ENCODE measurements at regions of chr10 and their contacts with region 1.

Region 1: GRCh38 chr10:91163269-91163868 is 57.1 kb upstream of the PCGF5 start:
- DNase-seq: peak; percentile 59 to 79
- ATAC-seq: peak; percentile 53 to 62 (median 58)
- H3K4me3 ChIP-seq: peak overlapping the region; percentile 98
- H3K27ac ChIP-seq: peak overlapping the region; percentile 99
- H3K4me1 ChIP-seq: peaks cover 31% of the 10 kb centered on the region
- H3K27me3 ChIP-seq: no peaks in the 10 kb centered on the region
- CTCF ChIP-seq: no peak

Region 2: DNA sequence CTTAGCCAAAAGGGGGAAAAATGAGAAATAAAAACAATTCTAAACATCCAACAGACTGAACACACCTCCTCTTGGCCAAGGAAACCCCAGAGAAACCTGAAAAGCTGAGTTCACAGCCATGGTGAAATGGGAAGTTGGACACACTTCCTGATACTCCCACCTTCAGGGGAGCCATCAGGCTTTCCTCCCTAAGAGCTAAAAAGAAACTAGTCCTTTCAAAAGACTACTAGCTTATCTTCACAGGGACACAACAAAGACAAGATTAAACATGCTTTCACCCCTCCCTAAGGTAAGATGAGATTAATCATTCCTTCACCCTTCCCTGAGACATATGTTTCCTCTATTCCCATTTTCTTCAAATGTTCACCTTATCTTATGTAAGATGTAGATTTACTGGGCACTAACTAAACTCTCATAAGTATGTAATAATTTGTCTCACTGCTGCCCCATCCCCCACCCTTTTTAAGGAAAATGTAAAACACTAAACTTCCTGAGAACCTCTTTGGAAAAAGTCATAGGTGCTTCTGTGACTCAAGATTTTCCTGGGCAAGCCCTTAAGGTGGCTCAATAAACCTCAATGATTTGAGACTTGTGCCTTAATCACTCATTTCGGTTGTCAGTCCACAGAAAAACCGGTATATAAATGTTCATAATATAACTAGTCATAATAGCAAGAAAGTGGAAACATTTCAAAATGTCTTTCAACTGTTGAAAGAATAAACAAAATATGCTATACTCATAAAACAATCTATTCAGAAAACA is 346.1 kb before region 1 on chr10:
- intact Hi-C with region 1: no loop called
- DNase-seq: no peak
- ATAC-seq: no peak
- H3K4me3 ChIP-seq: no peak overlapping the region
- H3K27ac ChIP-seq: no peak overlapping the region
- H3K4me1 ChIP-seq: no peaks in the 10 kb centered on the region
- H3K27me3 ChIP-seq: no peaks in the 10 kb centered on the region
- CTCF ChIP-seq: no peak

Region 3: GRCh38 chr10:91198781-91199180 is 35.4 kb after region 1 on chr10:
- intact Hi-C with region 1: loop called in 1 of 2 experiments (anchors 5 kb)
- DNase-seq: no peak
- ATAC-seq: peak; percentile 76 to 93 (median 90)
- H3K4me3 ChIP-seq: peak overlapping the region; percentile 37
- H3K27ac ChIP-seq: peak overlapping the region; percentile 74
- H3K4me1 ChIP-seq: peaks cover 66% of the 10 kb centered on the region
- H3K27me3 ChIP-seq: no peaks in the 10 kb centered on the region
- CTCF ChIP-seq: no peak

Region 4: DNA sequence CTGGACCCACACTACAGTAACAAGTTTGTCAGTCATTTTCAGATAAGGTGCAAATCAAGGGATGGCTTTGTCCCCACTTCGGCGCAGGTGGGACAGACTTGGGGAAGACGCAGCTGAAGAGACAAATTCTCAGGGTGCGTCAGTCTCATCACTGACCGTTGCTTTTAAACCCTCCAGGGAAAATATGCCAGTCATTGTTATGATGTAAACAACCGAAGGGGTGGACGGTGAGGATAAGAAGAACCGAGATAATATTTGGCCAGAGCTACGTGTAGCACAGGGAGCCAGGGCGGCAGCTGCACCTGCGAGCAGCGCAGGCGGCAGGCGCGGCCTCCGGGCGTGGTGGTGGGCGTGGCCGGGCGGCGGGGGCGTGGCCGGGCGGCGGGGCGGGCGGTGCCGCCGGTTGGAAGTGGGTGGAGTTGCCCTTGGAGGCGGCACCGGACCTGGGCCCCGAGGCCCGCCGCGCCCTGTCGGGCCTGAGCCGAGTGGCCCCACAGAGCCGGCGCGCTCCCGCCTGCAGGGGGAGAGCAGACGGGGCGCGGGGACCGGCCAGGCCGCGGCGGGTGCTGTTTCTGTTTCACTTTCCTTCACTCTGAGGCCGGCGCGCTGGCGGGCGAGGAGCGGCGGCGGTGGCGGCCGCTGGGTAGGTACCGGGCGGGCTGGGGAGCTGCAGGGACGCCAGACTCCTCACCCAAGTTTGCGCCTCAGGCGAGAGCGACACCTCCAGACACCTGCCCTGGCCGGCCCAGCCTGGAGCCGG is 57.0 kb after region 1 on chr10 and contains the start of gene PCGF5:
- intact Hi-C with region 1: loop called (anchors 2 to 5 kb)
- DNase-seq: peak; percentile 91 to 96
- ATAC-seq: peak; percentile 98 to 100 (median 99)
- H3K4me3 ChIP-seq: peak within 1 kb of the TSS; percentile 82
- H3K27ac ChIP-seq: peak within 1 kb of the TSS; percentile 88
- H3K4me1 ChIP-seq: peaks cover 42% of the 10 kb centered on the region
- H3K27me3 ChIP-seq: no peaks in the 10 kb centered on the region
- CTCF ChIP-seq: peak; percentile 37
- total RNA-seq, gene PCGF5: 30.3 to 85.2 (median 57.4) TPM